ENCODE measurements at regions of chr6 and their contacts with region 1.

Region 1: GRCh38 chr6:137861550-137862337 is 5.3 kb upstream of the TNFAIP3 start:
- DNase-seq: no peak
- ATAC-seq: no peak
- H3K4me3 Mint-ChIP-seq: no peak overlapping the region
- H3K27ac Mint-ChIP-seq: no peak overlapping the region
- H3K4me1 Mint-ChIP-seq: peaks cover 19% of the 10 kb centered on the region
- H3K27me3 Mint-ChIP-seq: no peaks in the 10 kb centered on the region
- CTCF ChIP-seq: no peak

Region 2: DNA sequence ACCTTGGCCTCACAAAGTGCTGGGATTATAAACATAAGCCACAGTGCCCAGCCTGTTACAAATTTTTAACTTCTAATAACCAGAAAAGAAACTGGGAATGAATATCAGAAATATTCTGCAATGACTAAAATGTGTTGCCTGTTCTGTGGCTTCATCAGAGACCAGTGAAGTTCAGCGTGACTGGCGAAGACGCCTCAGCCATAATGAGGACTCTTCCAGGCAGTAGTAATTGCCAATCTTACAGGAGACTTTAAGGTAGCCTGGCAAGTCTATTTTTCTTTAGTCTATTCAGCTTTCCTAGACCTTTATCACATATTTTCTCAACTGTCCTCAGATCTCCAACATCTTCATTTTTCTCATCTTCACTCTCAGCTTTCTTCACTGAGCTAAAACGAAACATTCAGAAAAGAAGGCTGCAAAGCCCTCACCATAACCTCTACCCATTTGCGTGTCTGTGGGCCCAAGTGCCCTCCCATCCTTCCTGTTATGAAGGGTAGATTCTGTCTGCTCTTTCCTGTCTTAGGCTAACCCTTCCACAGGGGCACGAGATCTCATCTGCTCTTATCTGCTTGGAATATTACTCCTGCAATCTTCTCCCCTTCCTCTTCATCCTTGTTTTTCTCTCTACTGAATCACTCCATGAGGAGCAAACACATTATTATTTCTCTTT is 325.5 kb before region 1 on chr6:
- CTCF ChIA-PET with region 1: no interaction called
- POLR2A ChIA-PET with region 1: no interaction called
- intact Hi-C with region 1: no loop called
- DNase-seq: no peak
- ATAC-seq: no peak
- H3K4me3 Mint-ChIP-seq: no peak overlapping the region
- H3K27ac Mint-ChIP-seq: no peak overlapping the region
- H3K4me1 Mint-ChIP-seq: no peaks in the 10 kb centered on the region
- H3K27me3 Mint-ChIP-seq: peaks cover 14% of the 10 kb centered on the region
- CTCF ChIP-seq: no peak

Region 3: DNA sequence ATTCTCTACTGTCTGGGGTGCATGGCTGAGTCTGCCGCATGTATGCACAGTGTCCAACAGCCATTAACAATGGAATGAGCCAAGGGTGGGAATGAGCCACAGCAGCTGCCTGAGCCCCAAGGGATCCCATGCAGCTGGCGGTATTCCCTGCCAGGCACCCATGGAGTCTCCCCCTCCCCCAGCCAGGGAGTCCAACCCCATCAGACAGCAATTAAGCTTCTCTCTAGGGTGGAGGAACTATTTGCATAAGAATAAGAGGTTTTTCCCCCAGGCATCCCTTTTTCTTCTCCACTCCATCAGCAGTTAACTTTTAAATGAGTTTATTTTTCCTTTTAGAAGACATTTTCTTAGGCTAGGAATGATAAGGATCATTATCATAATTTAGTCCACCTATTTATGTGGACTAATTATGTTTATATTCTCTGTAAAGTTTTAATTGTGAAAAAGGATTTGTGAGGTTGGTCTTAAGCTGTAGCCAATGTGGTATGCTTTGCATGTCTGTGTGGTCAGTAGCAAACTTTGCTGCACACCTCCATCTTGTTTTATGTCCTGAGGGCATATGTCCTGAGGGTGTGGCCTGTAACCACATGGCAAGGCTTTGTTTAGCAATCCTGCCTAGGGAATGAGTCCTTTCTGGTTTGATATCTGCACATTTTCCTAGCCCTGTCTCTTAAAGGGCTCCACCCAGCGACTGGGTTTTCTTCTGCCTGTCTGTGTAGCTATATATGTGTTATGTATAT is 208.6 kb before region 1 on chr6:
- CTCF ChIA-PET with region 1: no interaction called
- POLR2A ChIA-PET with region 1: no interaction called
- intact Hi-C with region 1: no loop called
- DNase-seq: no peak
- ATAC-seq: no peak
- H3K4me3 Mint-ChIP-seq: no peak overlapping the region
- H3K27ac Mint-ChIP-seq: no peak overlapping the region
- H3K4me1 Mint-ChIP-seq: no peaks in the 10 kb centered on the region
- H3K27me3 Mint-ChIP-seq: peaks cover 12% of the 10 kb centered on the region
- CTCF ChIP-seq: no peak

Region 4: DNA sequence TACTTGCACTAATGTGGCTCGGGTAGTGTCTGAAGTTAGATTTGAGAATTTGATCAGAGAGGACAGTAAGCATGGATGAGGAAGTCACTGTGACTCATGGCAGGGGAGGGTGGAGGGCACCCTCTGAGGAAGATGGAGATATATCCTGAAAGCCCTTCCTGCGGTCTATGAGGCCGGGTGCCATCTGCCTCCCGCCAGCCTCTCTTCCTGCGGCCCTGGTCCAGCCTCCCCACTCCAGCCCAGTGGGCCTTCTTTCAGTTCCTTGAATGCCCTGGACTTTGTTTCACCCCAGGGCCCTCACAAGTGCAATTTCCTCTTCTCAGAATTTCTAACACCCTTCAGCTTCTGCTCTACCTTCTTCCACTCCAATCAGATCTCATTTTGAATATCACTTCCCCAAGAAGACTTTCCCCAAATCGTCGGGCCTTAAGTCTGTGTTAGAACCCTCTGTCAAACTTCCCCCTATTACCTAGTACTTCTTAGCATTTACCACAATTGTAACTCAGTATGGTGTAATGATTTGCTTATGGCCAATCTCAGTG is 14.9 kb before region 1 on chr6:
- CTCF ChIA-PET with region 1: no interaction called
- POLR2A ChIA-PET with region 1: interaction called, 8 read pairs
- intact Hi-C with region 1: loop called (anchors 1 kb)
- DNase-seq: peak; percentile 27
- ATAC-seq: peak; percentile 90
- H3K4me3 Mint-ChIP-seq: no peak overlapping the region
- H3K27ac Mint-ChIP-seq: no peak overlapping the region
- H3K4me1 Mint-ChIP-seq: peaks cover 10% of the 10 kb centered on the region
- H3K27me3 Mint-ChIP-seq: no peaks in the 10 kb centered on the region
- CTCF ChIP-seq: no peak